Natural killer cell (primary cell): ENCODE measurements at regions of chr6 and their contacts with region 1.

Region 1: DNA sequence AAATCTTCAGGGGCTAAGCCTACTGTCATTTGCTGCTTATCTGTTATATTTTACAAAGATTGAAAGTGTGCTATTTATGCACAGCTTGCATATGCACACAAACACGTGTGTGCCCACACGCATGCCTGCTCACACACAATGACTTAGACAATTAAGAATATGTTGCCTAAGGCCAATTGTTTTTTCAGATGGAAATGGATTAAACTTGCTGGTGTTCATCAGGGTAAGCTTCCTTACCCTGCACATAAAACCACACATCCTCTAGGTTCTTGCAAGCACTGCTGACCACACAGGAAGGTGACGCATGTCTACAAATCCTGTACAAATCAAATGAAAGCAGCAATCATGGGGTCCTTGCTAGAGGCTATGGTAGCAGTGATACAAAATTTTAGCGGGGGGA is 58.4 kb downstream of the GJA10 start:
- DNase-seq: peak; percentile 32 to 87
- ATAC-seq: peak; percentile 86 to 91 (median 87)
- H3K4me3 ChIP-seq: no peak overlapping the region
- H3K4me3 Mint-ChIP-seq: peak overlapping the region; percentile 81
- H3K27ac ChIP-seq: peak overlapping the region; percentile 57
- H3K27ac Mint-ChIP-seq: peak overlapping the region; percentile 81 to 87
- H3K4me1 ChIP-seq: peaks cover 49% of the 10 kb centered on the region
- H3K4me1 Mint-ChIP-seq: peaks cover 49 to 53% of the 10 kb centered on the region in 2 donors
- H3K27me3 ChIP-seq: no peaks in the 10 kb centered on the region
- H3K27me3 Mint-ChIP-seq: no peaks in the 10 kb centered on the region
- CTCF ChIP-seq: no peak

Region 2: GRCh38 chr6:89638320-89639195 is 314.1 kb before region 1 on chr6 and contains the start of gene LYRM2:
- intact Hi-C with region 1: no loop called
- DNase-seq: peak; percentile 90 to 95
- ATAC-seq: peak; percentile 93 to 98 (median 93)
- H3K4me3 ChIP-seq: peak within 1 kb of the TSS; percentile 91
- H3K4me3 Mint-ChIP-seq: peak within 1 kb of the TSS; percentile 98
- H3K27ac ChIP-seq: peak within 1 kb of the TSS; percentile 92
- H3K27ac Mint-ChIP-seq: peak within 1 kb of the TSS; percentile 99 to 100
- H3K4me1 ChIP-seq: peaks cover 10% of the 10 kb centered on the region
- H3K4me1 Mint-ChIP-seq: peaks cover 21 to 26% of the 10 kb centered on the region in 2 donors
- H3K27me3 ChIP-seq: no peaks in the 10 kb centered on the region
- H3K27me3 Mint-ChIP-seq: no peaks in the 10 kb centered on the region
- CTCF ChIP-seq: no peak
- total RNA-seq, gene LYRM2: 21.1 to 25.5 (median 25.0) TPM

Region 3: GRCh38 chr6:90184334-90185298 is 231.9 kb after region 1 on chr6:
- intact Hi-C with region 1: loop called (anchors 5 kb)
- DNase-seq: peak in 1 of 2 donors; percentile 56
- ATAC-seq: no peak
- H3K4me3 ChIP-seq: no peak overlapping the region
- H3K4me3 Mint-ChIP-seq: no peak overlapping the region
- H3K27ac ChIP-seq: no peak overlapping the region
- H3K27ac Mint-ChIP-seq: no peak overlapping the region
- H3K4me1 ChIP-seq: peaks cover 16% of the 10 kb centered on the region
- H3K4me1 Mint-ChIP-seq: peaks cover 19 to 22% of the 10 kb centered on the region in 2 donors
- H3K27me3 ChIP-seq: no peaks in the 10 kb centered on the region
- H3K27me3 Mint-ChIP-seq: no peaks in the 10 kb centered on the region
- CTCF ChIP-seq: no peak

Region 4: DNA sequence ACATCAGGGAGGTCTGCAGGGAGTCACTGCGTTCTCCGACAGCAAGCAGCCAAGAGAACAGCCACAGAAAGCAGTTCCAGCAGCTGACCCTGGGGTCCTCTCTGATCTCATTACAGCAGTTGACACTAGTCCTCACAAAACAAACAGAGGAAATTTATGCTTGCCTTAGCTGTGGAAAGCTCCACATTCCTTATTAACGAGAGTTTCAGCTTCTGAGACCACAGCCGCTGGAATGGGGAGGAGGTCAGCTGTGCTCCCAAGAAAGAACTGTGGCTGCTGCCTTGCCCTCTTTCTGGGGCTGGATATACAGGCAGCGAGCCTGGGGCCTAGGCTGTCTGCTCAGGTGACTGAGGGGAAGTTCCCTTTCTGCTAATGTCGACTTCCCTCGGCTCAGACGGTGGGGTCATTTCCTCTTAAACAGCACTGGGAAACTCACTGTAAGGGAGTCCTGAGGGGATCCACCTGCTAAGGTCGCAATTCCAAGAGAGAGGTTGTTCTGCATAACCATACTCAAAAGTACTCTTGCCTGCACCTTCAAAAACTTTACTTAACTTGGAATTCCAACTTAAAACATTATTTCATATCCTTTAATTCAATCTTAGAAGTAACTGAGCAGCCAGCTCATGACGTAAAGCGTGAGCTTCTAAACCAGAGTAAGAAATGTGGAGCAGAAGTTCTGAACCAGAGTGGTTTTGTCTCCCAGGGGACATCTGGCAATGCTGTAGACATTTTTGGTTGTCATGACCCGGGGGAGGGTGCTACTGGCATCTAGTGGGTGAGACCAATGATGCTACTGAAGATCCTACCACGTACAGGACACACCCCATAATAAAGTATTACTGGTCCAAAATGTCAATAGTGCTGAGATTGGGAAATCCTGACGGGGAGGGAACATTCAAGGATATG is 263.6 kb after region 1 on chr6:
- intact Hi-C with region 1: loop called (anchors 1 kb)
- DNase-seq: peak in 1 of 2 donors; percentile 81
- ATAC-seq: peak in 1 of 3 donors; percentile 20
- H3K4me3 ChIP-seq: no peak overlapping the region
- H3K4me3 Mint-ChIP-seq: no peak overlapping the region
- H3K27ac ChIP-seq: peak overlapping the region; percentile 82
- H3K27ac Mint-ChIP-seq: peak overlapping the region in 1 of 2 donors; percentile 63
- H3K4me1 ChIP-seq: peaks cover 36% of the 10 kb centered on the region
- H3K4me1 Mint-ChIP-seq: peaks cover 0 to 9% of the 10 kb centered on the region in 2 donors
- H3K27me3 ChIP-seq: no peaks in the 10 kb centered on the region
- H3K27me3 Mint-ChIP-seq: no peaks in the 10 kb centered on the region
- CTCF ChIP-seq: no peak

Region 5: DNA sequence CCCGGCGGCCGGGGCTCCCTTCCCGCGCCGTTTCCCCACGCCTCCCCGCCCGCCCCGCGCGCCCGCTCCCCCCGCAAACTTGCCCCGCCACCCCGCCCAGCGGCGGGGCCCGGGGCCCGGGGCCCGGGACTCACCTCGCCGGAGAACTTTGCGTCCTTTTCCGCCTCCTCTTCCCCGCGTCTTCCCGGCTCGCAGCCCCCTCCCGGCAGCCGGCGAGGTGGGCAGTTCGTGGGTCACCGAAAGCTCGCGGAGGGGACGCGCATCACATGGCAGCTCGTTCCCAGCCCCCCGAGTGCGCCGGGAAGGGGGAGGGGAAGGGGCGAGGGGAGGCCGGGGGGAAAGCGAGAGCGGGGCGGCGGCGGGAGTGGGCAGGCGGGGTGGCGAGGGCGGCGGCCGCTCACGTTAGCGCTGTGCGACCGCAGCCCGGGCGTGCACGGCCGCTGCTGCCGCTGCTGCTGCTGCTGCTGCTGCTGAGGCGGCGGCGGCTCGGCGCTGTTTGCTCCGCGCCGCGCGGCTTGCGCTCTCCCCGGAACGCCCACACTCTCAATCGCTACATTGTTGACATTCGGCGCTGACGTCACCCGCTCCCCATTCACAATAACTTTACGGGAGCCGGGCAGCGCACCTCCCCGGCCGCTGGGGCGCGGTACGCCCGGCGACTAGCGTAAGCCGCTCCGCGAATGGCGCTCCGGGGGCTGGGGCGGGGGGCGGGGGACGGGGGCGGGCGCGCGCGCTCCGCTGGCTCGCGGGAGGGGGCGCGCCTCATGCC is 343.8 kb after region 1 on chr6 and contains the start of gene BACH2:
- intact Hi-C with region 1: loop called (anchors 5 kb)
- DNase-seq: peak; percentile 84 to 97
- ATAC-seq: peak; percentile 68 to 81 (median 72)
- H3K4me3 ChIP-seq: peak within 1 kb of the TSS; percentile 67
- H3K4me3 Mint-ChIP-seq: peak within 1 kb of the TSS; percentile 94
- H3K27ac ChIP-seq: peak within 1 kb of the TSS; percentile 79
- H3K27ac Mint-ChIP-seq: peak within 1 kb of the TSS; percentile 83 to 86
- H3K4me1 ChIP-seq: peaks cover 19% of the 10 kb centered on the region
- H3K4me1 Mint-ChIP-seq: peaks cover 11 to 21% of the 10 kb centered on the region in 2 donors
- H3K27me3 ChIP-seq: peaks cover 3% of the 10 kb centered on the region
- H3K27me3 Mint-ChIP-seq: peaks cover 13 to 30% of the 10 kb centered on the region in 2 donors
- CTCF ChIP-seq: no peak
- total RNA-seq, gene BACH2: 32.1 to 37.8 (median 32.7) TPM